ENCODE measurements at regions of chr13 and their contacts with region 1.

Region 1: DNA sequence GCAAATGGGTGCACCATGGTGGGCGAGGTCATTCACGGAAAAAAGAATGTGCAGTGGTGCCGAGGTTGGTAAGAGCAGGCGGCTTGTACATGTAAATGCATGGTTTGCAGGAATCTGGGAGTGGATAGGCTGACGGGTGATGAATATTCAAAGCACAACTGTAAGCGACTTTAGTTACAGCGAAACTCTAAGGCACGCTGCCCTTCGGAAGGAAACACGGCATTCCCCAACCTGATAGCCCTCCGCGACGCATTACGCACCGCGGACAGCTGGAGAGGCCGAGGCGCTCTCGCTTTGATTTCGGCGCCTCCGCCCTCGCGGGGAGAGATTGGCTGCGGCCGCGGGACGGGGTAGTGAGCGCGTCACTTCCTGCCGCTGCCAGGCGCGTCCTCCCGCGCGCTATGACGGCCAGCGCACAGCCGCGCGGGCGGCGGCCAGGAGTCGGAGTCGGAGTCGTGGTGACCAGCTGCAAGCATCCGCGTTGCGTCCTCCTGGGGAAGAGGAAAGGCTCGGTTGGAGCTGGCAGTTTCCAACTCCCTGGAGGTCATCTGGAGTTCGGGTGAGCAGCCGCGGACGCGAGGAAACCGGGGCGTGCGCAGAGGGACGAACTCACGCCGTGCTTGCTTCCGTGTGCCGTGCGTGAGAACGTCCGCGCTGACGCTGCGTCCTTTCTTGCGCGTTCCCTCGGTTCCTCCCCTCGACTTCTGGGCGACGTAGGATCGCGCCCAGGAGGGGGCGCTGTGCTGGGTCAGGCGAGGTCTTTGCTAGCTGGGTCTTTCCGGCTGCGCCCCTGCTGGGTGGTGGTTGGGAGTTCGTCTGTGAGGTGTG is at the start of gene NUDT15:
- DNase-seq: peak; percentile 98
- ATAC-seq: peak; percentile 92
- H3K4me3 Mint-ChIP-seq: peak within 1 kb of the TSS; percentile 87
- H3K27ac Mint-ChIP-seq: peak within 1 kb of the TSS; percentile 93
- H3K4me1 Mint-ChIP-seq: peaks cover 41% of the 10 kb centered on the region
- H3K27me3 Mint-ChIP-seq: no peaks in the 10 kb centered on the region
- total RNA-seq, gene NUDT15: 15.4 to 15.7 TPM

Region 2: DNA sequence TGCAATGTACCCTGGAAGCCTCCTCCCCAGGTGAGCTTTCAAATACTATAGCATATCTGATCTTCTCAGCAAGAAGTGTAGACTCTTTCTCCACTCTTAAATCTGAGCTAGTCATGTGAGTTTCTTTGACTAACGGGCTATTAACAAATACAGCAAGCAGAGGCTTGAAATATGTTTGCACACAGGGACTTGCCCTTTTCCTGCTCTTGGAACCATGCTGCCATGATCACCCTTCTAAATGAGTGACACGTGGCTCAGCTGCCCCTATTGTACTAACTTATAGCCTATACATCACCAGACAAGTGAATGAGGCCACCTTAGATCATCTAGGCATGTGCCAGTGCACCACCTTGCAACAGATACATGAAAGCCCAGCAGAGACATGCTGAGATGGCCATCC is 23.2 kb before region 1 on chr13:
- CTCF ChIA-PET with region 1: interaction called, 11 read pairs
- POLR2A ChIA-PET with region 1: no interaction called
- DNase-seq: no peak
- ATAC-seq: no peak
- H3K4me3 Mint-ChIP-seq: no peak overlapping the region
- H3K27ac Mint-ChIP-seq: no peak overlapping the region
- H3K4me1 Mint-ChIP-seq: peaks cover 2% of the 10 kb centered on the region
- H3K27me3 Mint-ChIP-seq: no peaks in the 10 kb centered on the region

Region 3: DNA sequence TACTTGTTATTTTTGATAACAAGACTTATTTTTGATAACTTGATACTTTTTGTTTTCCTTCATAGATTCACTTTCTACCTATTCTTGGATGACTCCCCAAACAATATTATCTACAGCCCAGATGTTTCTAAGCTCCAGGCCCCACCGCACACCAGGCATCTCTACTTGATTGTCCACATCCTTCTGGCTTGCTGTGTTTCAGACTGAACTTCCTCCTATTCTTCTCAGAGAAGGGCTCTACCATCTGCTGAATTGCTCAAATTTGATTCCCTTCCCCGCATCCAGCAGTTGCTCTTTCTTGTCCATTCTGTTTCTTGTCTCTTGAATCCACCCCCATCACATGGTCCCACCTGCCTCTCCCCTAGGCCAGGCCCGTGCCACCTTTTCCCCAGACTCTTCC is 13.0 kb after region 1 on chr13:
- CTCF ChIA-PET with region 1: interaction called, 44 read pairs
- POLR2A ChIA-PET with region 1: interaction called, 11 read pairs
- DNase-seq: no peak
- ATAC-seq: no peak
- H3K4me3 Mint-ChIP-seq: no peak overlapping the region
- H3K27ac Mint-ChIP-seq: no peak overlapping the region
- H3K4me1 Mint-ChIP-seq: peaks cover 2% of the 10 kb centered on the region
- H3K27me3 Mint-ChIP-seq: no peaks in the 10 kb centered on the region

Region 4: GRCh38 chr13:48066310-48066989 is 28.9 kb after region 1 on chr13:
- CTCF ChIA-PET with region 1: interaction called, 29 read pairs
- POLR2A ChIA-PET with region 1: interaction called, 11 read pairs
- DNase-seq: peak; percentile 76
- ATAC-seq: peak; percentile 94
- H3K4me3 Mint-ChIP-seq: no peak overlapping the region
- H3K27ac Mint-ChIP-seq: peak overlapping the region; percentile 87
- H3K4me1 Mint-ChIP-seq: peaks cover 19% of the 10 kb centered on the region
- H3K27me3 Mint-ChIP-seq: no peaks in the 10 kb centered on the region

Region 5: DNA sequence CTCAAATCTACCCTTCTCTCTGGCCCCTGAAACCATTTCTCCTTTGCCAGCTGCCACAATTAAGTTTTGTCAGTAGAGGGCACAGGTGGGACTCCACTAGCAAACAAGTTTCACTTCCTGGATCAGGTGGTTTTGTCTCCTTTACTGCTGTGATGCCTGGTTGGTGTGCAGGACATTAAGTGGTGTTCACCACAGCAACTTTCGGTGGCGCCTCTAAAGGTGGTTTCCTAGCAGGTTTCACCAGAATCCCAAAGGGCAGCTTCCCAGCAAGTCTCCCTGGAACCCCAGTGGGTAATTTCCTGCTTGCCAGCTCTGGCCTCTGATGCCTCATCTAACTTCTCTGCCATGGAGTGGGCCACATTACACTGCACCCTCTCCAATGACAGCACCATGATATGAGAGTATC is 40.7 kb after region 1 on chr13:
- CTCF ChIA-PET with region 1: interaction called, 25 read pairs
- POLR2A ChIA-PET with region 1: interaction called, 6 read pairs
- DNase-seq: peak; percentile 67
- ATAC-seq: peak; percentile 93
- H3K4me3 Mint-ChIP-seq: no peak overlapping the region
- H3K27ac Mint-ChIP-seq: peak overlapping the region; percentile 77
- H3K4me1 Mint-ChIP-seq: peaks cover 12% of the 10 kb centered on the region
- H3K27me3 Mint-ChIP-seq: no peaks in the 10 kb centered on the region

Region 6: DNA sequence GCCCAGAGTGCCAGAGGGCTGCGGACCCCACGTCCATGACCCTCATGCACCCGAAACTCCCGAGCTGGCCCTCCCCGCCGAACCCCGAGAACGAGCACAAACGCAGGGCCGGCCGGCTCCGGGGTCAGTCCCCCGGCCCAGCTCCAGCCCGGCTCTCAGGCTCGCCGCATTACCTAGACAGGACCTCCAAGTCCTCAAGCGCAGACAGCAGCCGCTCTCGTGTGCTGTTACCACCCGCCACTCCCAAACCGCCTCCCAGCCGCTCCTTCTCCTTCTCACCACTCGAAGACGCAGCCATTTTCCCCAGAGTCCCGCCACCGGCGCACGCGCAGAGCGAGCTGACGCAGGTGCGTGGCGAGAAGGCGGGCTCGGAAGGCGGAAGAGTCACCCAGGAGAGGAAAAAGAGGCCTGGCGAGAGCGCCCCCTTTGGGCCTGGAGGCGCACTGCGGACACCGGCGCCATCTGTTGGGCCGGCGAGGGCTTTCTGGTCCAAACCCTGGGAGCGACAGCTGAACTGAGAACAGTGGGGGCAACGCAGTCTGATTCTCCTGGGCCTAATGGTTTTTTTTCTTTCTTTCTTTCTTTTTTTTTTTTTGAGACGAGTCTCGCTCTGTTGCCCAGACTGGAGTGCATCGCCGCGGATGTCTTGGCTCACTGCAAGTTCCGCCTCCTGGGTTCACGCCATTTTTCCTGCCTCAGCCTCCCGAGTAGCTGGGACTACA is 57.4 kb after region 1 on chr13 and contains the start of gene MED4:
- CTCF ChIA-PET with region 1: interaction called, 54 read pairs
- POLR2A ChIA-PET with region 1: interaction called, 27 read pairs
- DNase-seq: peak; percentile 98
- ATAC-seq: peak; percentile 97
- H3K4me3 Mint-ChIP-seq: peak within 1 kb of the TSS; percentile 96
- H3K27ac Mint-ChIP-seq: peak within 1 kb of the TSS; percentile 95
- H3K4me1 Mint-ChIP-seq: peaks cover 40% of the 10 kb centered on the region
- H3K27me3 Mint-ChIP-seq: peaks cover 3% of the 10 kb centered on the region
- total RNA-seq, gene MED4: 65.3 to 65.5 TPM

Region 7: DNA sequence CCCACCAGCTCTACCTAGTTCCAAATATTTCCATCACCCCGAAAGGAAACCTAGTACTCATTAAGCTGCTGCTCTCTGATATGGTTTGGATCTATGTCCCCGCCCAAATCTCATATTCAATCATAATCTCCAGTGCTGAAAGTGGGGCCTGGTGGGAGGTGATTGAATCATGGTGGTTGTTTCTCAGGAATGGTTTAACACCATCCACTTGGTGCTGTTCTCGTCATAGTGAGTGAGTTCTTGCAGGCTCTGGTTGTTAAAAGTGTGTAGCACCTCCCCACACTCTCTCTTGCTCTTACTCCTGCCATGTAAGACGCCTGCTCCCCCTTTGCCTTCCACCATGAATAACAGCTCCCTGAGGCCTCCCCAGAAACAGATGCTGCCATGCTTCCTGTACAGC is 100.7 kb after region 1 on chr13:
- CTCF ChIA-PET with region 1: no interaction called
- POLR2A ChIA-PET with region 1: no interaction called
- DNase-seq: no peak
- ATAC-seq: no peak
- H3K4me3 Mint-ChIP-seq: no peak overlapping the region
- H3K27ac Mint-ChIP-seq: no peak overlapping the region
- H3K4me1 Mint-ChIP-seq: peaks cover 4% of the 10 kb centered on the region
- H3K27me3 Mint-ChIP-seq: no peaks in the 10 kb centered on the region

Region 8: DNA sequence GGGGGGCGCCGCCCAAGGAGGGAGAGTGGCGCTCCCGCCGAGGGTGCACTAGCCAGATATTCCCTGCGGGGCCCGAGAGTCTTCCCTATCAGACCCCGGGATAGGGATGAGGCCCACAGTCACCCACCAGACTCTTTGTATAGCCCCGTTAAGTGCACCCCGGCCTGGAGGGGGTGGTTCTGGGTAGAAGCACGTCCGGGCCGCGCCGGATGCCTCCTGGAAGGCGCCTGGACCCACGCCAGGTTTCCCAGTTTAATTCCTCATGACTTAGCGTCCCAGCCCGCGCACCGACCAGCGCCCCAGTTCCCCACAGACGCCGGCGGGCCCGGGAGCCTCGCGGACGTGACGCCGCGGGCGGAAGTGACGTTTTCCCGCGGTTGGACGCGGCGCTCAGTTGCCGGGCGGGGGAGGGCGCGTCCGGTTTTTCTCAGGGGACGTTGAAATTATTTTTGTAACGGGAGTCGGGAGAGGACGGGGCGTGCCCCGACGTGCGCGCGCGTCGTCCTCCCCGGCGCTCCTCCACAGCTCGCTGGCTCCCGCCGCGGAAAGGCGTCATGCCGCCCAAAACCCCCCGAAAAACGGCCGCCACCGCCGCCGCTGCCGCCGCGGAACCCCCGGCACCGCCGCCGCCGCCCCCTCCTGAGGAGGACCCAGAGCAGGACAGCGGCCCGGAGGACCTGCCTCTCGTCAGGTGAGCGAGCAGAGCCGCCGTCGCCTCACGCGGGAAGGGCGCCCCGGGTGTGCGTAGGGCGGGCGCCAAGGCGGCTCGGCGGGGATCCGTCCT is 266.0 kb after region 1 on chr13 and contains the start of gene RB1:
- CTCF ChIA-PET with region 1: interaction called, 10 read pairs
- POLR2A ChIA-PET with region 1: interaction called, 7 read pairs
- DNase-seq: peak; percentile 94
- ATAC-seq: peak; percentile 85
- H3K4me3 Mint-ChIP-seq: peak within 1 kb of the TSS; percentile 94
- H3K27ac Mint-ChIP-seq: peak within 1 kb of the TSS; percentile 98
- H3K4me1 Mint-ChIP-seq: peaks cover 29% of the 10 kb centered on the region
- H3K27me3 Mint-ChIP-seq: no peaks in the 10 kb centered on the region
- total RNA-seq, gene RB1: 61.7 to 64.6 TPM

Region 9: DNA sequence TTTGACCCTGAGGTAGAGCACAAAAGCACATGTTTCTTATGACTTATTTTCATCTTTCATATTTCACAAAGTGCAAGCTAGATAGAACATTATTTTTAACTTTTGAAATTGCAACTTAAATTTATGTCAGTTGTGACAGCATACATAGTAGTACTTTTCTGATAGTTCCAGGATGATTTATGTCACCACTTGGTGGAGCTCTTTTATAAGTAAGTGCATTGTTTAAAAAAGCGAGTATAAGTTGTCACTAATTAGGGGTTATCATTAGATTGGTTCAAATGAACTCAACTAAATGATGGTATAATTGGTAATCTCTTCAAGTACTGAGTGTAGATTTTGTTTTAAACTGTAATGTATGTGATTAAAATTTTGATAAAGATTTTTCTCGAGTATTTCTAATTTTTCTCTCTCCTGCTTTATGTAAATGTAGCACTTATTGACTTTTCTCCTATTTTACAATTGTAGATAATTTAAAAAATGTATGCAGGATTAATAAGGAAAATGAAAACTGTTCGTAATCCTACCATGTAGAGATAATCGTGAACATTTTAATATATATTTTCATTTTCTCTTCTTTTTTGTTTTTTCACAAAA is 297.1 kb after region 1 on chr13:
- CTCF ChIA-PET with region 1: no interaction called
- POLR2A ChIA-PET with region 1: no interaction called
- DNase-seq: no peak
- ATAC-seq: peak; percentile 71
- H3K4me3 Mint-ChIP-seq: no peak overlapping the region
- H3K27ac Mint-ChIP-seq: no peak overlapping the region
- H3K4me1 Mint-ChIP-seq: peaks cover 25% of the 10 kb centered on the region
- H3K27me3 Mint-ChIP-seq: no peaks in the 10 kb centered on the region

Measured in activated CD8-positive, alpha-beta T cell treated with anti-CD3 and anti-CD28 coated beads, Interleukin-2, amount 10 ng/mL, durations not matched to agents 7 days and 5 days (primary cell).